Naive thymus-derived CD4-positive, alpha-beta T cell (primary cell): ENCODE measurements at regions of chr12 and their contacts with region 1.

Region 1: DNA sequence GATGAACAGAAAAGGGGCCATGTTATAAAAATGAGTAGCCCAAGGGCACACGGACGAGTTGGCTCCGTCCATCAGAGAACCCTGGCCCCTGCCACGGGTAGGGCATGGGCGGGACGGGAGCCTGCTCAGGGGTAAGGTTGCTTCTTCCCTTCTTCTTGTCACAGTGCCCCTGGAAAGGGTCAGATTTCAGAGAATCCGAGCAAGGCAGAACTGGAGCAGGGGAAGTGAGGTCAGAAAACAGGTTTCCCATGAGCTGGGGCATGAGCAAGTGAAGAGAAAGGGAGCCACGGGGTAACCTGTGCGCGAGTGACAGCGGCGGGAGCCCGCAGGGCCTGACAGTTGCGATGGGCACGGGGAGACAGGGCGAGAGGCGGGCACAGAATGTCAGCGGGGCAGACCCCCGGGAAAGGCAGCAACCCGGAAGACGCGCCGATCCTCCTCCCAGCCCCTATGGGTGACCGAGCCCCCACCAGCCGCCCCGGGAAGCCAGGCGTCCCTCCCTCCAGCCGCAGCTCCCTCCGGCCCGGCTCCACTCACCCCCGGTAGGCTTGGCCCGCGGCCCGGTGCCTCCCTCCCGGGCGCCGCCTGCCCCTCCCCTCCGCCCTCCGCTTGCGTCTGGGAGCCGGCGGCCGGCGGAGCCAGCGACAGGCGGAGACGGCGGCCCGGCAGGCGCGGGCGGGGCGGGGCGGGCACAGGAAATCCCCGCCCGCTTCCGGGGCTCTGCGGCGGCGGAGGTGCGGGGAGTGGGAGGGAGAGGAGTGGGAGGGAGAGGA is at the start of gene ZNF641:
- DNase-seq: peak; percentile 74 to 85 (median 84)
- ATAC-seq: peak; percentile 95
- H3K4me3 ChIP-seq: peak within 1 kb of the TSS; percentile 77
- H3K4me3 Mint-ChIP-seq: peak within 1 kb of the TSS; percentile 91 to 99 (median 96)
- H3K27ac ChIP-seq: peak within 1 kb of the TSS; percentile 92
- H3K27ac Mint-ChIP-seq: peak within 1 kb of the TSS; percentile 89 to 99 (median 96)
- H3K4me1 ChIP-seq: peaks cover 14 to 25% of the 10 kb centered on the region in 2 donors
- H3K4me1 Mint-ChIP-seq: peaks cover 25 to 61% (median 49%) of the 10 kb centered on the region in 7 donors
- H3K27me3 ChIP-seq: peaks cover 0 to 5% of the 10 kb centered on the region in 2 donors
- H3K27me3 Mint-ChIP-seq: peaks cover 0 to 12% (median 0%) of the 10 kb centered on the region in 5 donors
- total RNA-seq, gene ZNF641: 22.1 to 50.3 (median 30.1) TPM

Region 2: DNA sequence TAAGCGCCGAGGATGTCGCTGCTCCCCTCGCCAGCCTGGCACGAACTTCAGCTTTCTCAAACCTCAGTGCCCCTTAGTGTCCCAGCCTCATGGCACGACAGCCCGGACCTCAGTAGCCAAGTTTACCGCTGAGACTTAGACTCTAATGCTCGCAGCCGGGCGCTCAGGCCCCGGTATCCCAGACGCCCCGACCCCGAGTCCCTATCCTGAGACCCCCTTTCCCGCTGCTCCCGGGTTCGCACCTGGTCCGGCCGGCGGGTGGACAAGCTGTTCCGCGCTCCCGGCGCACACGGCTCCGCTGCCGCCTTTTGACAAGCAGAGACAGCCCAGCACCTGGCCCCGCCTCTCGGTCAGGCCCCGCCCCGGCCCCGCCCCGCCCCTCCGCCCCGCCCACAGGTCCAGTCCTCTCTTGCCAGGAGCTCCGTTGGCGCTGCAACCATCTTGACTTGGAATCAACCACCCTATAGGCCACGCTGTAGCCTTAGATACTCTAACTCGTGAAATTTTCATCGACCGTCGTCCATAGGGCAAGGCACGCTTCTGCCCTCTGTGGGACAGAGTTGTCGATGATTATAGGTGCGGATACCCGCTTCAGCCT is 445.6 kb before region 1 on chr12 and contains the start of gene VDR:
- CTCF ChIA-PET with region 1: no interaction called
- POLR2A ChIA-PET with region 1: no interaction called
- intact Hi-C with region 1: loop called in 1 of 2 experiments (anchors 10 kb)
- DNase-seq: peak; percentile 42 to 76 (median 64)
- ATAC-seq: peak; percentile 86
- H3K4me3 ChIP-seq: peak within 1 kb of the TSS; percentile 73
- H3K4me3 Mint-ChIP-seq: peak within 1 kb of the TSS; percentile 86 to 98 (median 94)
- H3K27ac ChIP-seq: peak within 1 kb of the TSS; percentile 44
- H3K27ac Mint-ChIP-seq: peak within 1 kb of the TSS; percentile 51 to 88 (median 74)
- H3K4me1 ChIP-seq: peaks cover 25 to 41% of the 10 kb centered on the region in 2 donors
- H3K4me1 Mint-ChIP-seq: peaks cover 35 to 57% (median 47%) of the 10 kb centered on the region in 7 donors
- H3K27me3 ChIP-seq: no peaks in the 10 kb centered on the region
- H3K27me3 Mint-ChIP-seq: peaks cover 0 to 34% (median 0%) of the 10 kb centered on the region in 5 donors
- total RNA-seq, gene VDR: 1.6 to 82.6 (median 2.9) TPM

Region 3: DNA sequence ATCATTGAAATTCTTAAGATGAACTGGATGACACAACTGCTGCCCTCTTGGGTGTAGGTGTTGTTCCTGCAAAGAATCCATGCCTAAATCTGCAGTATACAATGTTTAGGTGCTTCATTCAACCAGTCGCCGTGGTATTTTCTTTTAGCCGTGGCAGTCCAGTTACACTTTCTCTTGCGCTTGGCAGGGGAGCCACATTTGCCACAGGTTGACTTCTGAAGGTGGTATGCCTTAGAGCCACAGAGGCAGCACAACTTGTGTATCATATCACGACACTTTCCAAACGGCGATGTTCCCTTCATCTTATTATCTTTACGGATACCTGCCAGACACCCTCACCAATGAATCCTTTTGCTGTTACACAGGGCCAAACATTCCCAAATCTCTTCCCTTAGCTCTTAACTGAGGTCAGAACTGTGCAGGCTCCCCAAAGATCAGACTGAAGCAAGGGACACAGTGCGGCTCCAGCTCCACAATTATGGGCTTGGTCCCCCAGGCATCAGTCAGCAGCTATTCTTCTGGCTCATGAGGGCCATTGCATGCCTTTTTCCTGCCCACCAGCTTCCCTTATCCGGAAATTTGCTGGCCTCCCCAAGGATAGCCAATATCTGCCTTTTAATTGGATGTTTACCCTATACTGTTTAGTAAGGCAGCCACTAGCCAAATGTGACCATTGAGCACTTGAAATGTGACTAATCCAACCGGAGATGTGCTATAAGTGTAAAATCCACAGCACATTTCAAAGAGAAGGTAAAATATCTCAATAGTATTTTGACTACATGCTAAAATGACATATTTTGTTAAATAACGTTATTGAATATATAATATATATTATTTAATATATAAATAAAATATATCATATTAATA is 295.2 kb before region 1 on chr12:
- CTCF ChIA-PET with region 1: no interaction called
- POLR2A ChIA-PET with region 1: no interaction called
- intact Hi-C with region 1: no loop called
- DNase-seq: peak in 1 of 9 donors; percentile 10
- ATAC-seq: no peak
- H3K4me3 ChIP-seq: no peak overlapping the region
- H3K4me3 Mint-ChIP-seq: no peak overlapping the region
- H3K27ac ChIP-seq: no peak overlapping the region
- H3K27ac Mint-ChIP-seq: peak overlapping the region in 2 of 9 donors; percentile 25 to 37
- H3K4me1 ChIP-seq: no peaks in the 10 kb centered on the region
- H3K4me1 Mint-ChIP-seq: peaks cover 0 to 12% (median 5%) of the 10 kb centered on the region in 7 donors
- H3K27me3 ChIP-seq: no peaks in the 10 kb centered on the region
- H3K27me3 Mint-ChIP-seq: no peaks in the 10 kb centered on the region

Region 4: DNA sequence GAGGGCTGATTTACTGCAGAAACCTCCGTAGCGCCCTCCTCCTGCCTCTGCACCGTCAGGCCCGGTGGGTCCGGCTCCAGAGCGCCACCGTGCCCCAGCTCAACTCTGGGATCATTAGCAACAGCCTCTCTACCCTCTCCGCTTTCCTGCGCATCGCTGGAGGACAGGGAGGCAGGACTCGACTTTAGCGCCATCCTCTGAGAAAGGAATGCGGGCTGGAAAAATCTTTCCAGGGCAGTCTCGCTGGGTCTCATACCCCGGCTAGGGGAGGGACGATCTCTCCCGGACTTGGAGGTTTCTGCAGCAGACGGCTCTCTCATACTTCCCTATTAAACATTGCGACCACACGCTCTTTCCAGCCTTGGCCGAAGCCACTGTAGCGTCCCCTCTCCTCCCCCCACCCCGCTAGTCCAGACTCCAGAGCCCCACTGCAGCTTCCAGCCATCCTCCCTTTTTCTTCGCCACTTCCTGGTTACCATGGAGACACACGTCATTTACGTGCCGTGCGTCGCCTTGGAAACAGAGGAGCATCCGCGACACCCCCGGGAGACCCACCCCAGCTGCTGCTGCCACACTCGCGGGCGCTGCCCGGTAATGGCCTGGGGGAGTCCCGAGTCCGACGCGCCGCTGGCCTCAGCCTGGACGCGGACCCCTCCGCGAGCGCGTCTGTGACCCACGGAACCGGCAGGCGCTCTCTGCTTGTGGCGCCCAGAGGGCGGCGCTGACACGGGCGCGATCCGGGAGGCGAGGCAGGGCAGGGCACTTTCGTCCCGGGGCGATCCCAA is 167.2 kb before region 1 on chr12 and contains the start of gene CCDC184:
- CTCF ChIA-PET with region 1: no interaction called
- POLR2A ChIA-PET with region 1: no interaction called
- intact Hi-C with region 1: loop called in 1 of 2 experiments (anchors 5 kb)
- DNase-seq: peak; percentile 58 to 85 (median 83)
- ATAC-seq: peak; percentile 84
- H3K4me3 ChIP-seq: peak within 1 kb of the TSS; percentile 80
- H3K4me3 Mint-ChIP-seq: peak within 1 kb of the TSS; percentile 91 to 98 (median 96)
- H3K27ac ChIP-seq: peak within 1 kb of the TSS; percentile 59
- H3K27ac Mint-ChIP-seq: peak within 1 kb of the TSS; percentile 60 to 95 (median 86)
- H3K4me1 ChIP-seq: peaks cover 6 to 11% of the 10 kb centered on the region in 2 donors
- H3K4me1 Mint-ChIP-seq: peaks cover 5 to 28% (median 8%) of the 10 kb centered on the region in 7 donors
- H3K27me3 ChIP-seq: peaks cover 0 to 4% of the 10 kb centered on the region in 2 donors
- H3K27me3 Mint-ChIP-seq: peaks cover 21 to 81% (median 38%) of the 10 kb centered on the region in 5 donors
- total RNA-seq, gene CCDC184: 0.22 to 3.8 (median 1.8) TPM in 4 of 5 experiments, not detected in the other

Region 5: GRCh38 chr12:48263617-48264016 is 86.8 kb before region 1 on chr12:
- CTCF ChIA-PET with region 1: no interaction called
- POLR2A ChIA-PET with region 1: no interaction called
- intact Hi-C with region 1: loop called in 1 of 2 experiments (anchors 5 kb)
- DNase-seq: no peak
- ATAC-seq: no peak
- H3K4me3 ChIP-seq: no peak overlapping the region
- H3K4me3 Mint-ChIP-seq: no peak overlapping the region
- H3K27ac ChIP-seq: no peak overlapping the region
- H3K27ac Mint-ChIP-seq: peak overlapping the region in 2 of 9 donors; percentile 3 to 81
- H3K4me1 ChIP-seq: no peaks in the 10 kb centered on the region
- H3K4me1 Mint-ChIP-seq: peaks cover 0 to 9% (median 0%) of the 10 kb centered on the region in 7 donors
- H3K27me3 ChIP-seq: no peaks in the 10 kb centered on the region
- H3K27me3 Mint-ChIP-seq: peaks cover 0 to 33% (median 0%) of the 10 kb centered on the region in 5 donors

Region 6: GRCh38 chr12:48296586-48297282 is 53.7 kb before region 1 on chr12:
- CTCF ChIA-PET with region 1: no interaction called
- POLR2A ChIA-PET with region 1: no interaction called
- intact Hi-C with region 1: loop called in 1 of 2 experiments (anchors 2 kb)
- DNase-seq: peak in 8 of 9 donors; percentile 23 to 49 (median 33)
- ATAC-seq: peak; percentile 81
- H3K4me3 ChIP-seq: peak overlapping the region; percentile 45
- H3K4me3 Mint-ChIP-seq: peak overlapping the region; percentile 66 to 89 (median 84)
- H3K27ac ChIP-seq: peak overlapping the region; percentile 50
- H3K27ac Mint-ChIP-seq: peak overlapping the region in 8 of 9 donors; percentile 12 to 87 (median 40)
- H3K4me1 ChIP-seq: no peaks in the 10 kb centered on the region
- H3K4me1 Mint-ChIP-seq: peaks cover 9 to 16% (median 12%) of the 10 kb centered on the region in 7 donors
- H3K27me3 ChIP-seq: no peaks in the 10 kb centered on the region
- H3K27me3 Mint-ChIP-seq: peaks cover 6 to 18% (median 10%) of the 10 kb centered on the region in 5 donors

Region 7: GRCh38 chr12:48454667-48455066 is 104.2 kb after region 1 on chr12:
- CTCF ChIA-PET with region 1: no interaction called
- POLR2A ChIA-PET with region 1: no interaction called
- intact Hi-C with region 1: loop called in 1 of 2 experiments (anchors 1 kb)
- DNase-seq: peak in 7 of 9 donors; percentile 13 to 57 (median 32)
- ATAC-seq: peak; percentile 73
- H3K4me3 ChIP-seq: no peak overlapping the region
- H3K4me3 Mint-ChIP-seq: no peak overlapping the region
- H3K27ac ChIP-seq: no peak overlapping the region
- H3K27ac Mint-ChIP-seq: no peak overlapping the region
- H3K4me1 ChIP-seq: no peaks in the 10 kb centered on the region
- H3K4me1 Mint-ChIP-seq: no peaks in the 10 kb centered on the region
- H3K27me3 ChIP-seq: no peaks in the 10 kb centered on the region
- H3K27me3 Mint-ChIP-seq: peaks cover 0 to 18% (median 8%) of the 10 kb centered on the region in 5 donors

Region 8: DNA sequence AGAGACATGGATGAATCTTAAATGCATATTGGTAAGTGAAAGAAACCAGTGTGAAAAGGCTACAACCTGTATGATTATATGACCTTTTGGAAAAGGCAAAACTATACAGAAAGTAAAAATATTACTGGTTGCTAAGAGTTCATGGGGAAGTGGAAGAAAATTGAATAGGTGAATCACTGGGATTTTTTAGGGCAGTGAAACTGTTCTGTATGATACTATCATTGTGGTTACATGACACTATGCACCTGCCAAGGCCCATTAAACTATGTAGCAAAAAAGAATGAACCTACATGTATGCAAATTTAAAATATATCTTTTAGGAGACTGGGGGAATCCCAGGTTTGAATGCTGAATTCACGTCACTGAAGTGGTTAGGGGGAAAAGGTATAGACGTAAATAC is 162.4 kb after region 1 on chr12:
- CTCF ChIA-PET with region 1: no interaction called
- POLR2A ChIA-PET with region 1: no interaction called
- intact Hi-C with region 1: no loop called
- DNase-seq: no peak
- ATAC-seq: no peak
- H3K4me3 ChIP-seq: no peak overlapping the region
- H3K4me3 Mint-ChIP-seq: no peak overlapping the region
- H3K27ac ChIP-seq: no peak overlapping the region
- H3K27ac Mint-ChIP-seq: no peak overlapping the region
- H3K4me1 ChIP-seq: no peaks in the 10 kb centered on the region
- H3K4me1 Mint-ChIP-seq: no peaks in the 10 kb centered on the region
- H3K27me3 ChIP-seq: no peaks in the 10 kb centered on the region
- H3K27me3 Mint-ChIP-seq: peaks cover 0 to 5% (median 2%) of the 10 kb centered on the region in 5 donors

Region 9: DNA sequence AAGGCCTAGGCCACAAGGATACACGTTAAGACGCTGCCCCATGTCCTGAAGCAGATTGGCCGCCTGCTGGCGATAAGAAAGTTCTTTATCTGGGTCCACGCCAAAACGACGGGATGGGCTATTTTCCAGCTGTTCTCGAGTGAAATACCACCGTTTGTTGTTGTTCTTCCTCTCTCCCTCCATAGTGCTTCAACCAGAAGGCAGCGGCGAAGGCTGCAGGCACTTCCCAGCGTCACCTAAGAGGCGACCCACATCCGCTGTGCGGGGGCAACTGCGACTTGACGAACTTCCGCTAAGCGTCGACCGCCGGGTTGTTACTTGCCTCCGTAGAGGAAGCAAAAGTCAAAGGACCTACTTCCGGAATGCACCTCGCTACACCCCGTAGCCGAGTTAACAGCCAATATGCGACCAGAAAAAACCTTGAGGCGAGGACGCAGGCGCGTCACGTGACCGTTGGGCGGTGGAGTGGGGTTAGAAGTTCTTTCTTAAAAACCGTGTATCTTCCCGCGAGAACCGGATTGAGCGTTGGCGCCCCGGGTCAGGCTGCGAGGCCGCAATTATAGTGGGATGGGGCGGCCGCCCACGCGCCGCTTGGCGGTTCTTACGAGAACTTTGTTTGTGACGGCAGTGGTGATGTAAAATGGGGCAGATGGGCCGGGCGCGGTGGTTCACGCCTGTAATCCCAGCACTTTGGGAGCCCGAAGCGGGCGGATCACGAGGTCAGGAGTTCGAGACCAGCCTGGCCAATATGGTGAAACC is 366.2 kb after region 1 on chr12 and contains the start of gene CCNT1:
- CTCF ChIA-PET with region 1: no interaction called
- POLR2A ChIA-PET with region 1: no interaction called
- intact Hi-C with region 1: loop called (anchors 5 to 10 kb)
- DNase-seq: peak; percentile 90 to 100 (median 99)
- ATAC-seq: peak; percentile 93
- H3K4me3 ChIP-seq: peak within 1 kb of the TSS; percentile 88
- H3K4me3 Mint-ChIP-seq: peak within 1 kb of the TSS; percentile 89 to 98 (median 94)
- H3K27ac ChIP-seq: peak within 1 kb of the TSS; percentile 95
- H3K27ac Mint-ChIP-seq: peak within 1 kb of the TSS; percentile 95 to 99 (median 98)
- H3K4me1 ChIP-seq: peaks cover 14 to 24% of the 10 kb centered on the region in 2 donors
- H3K4me1 Mint-ChIP-seq: peaks cover 21 to 50% (median 37%) of the 10 kb centered on the region in 7 donors
- H3K27me3 ChIP-seq: no peaks in the 10 kb centered on the region
- H3K27me3 Mint-ChIP-seq: peaks cover 0 to 4% (median 0%) of the 10 kb centered on the region in 5 donors
- total RNA-seq, gene CCNT1: 62.5 to 127 (median 76.6) TPM